ENCODE measurements at regions of chr11 and their contacts with region 1.

Region 1: GRCh38 chr11:8263769-8264410 is at the start of gene LMO1:
- DNase-seq: no peak
- H3K4me3 ChIP-seq: peak within 1 kb of the TSS; percentile 45
- CTCF ChIP-seq: peak; percentile 95

Region 2: DNA sequence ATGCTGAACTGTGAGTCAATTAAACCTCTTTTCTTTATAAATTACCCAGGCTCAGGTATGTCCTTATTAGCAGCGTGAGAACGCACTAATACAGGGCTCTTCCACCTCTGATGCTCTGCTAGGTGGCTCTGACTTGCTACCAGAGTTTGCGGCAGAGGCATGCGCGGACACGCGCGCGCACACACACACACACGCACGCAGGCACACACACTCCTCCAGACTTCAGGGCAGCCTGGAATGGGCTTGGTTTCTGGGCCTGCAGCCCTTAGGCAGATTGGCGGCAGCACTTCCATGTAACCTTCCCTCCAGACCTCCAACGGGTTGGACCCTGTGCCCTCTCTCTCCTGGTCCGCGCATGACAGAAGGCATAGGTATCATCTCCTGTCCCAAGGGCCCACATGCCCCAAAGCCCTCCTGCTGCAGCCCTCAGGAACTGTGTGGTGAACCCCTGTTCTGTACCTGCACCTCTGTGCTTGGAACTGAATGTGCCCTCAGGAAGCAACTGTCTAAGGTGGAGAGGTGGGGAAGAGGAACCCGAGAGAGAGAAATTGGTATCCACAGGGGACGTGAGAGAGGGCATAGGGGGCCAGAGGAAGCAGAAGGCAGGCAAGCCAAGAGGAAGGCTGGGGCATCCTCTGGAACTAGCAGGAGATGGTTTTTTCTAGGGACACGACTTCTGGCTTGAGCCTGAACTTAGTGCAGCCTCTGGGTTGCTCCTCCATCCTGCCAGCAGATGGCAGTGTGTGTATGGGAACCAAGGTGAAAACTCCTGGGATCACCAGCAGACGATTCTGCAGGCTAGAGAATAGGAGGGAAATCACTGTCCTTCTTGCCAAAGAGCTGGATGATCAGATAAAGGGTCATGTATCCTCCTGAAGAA is 71.6 kb before region 1 on chr11:
- CTCF ChIA-PET with region 1: interaction called, 19 read pairs
- POLR2A ChIA-PET with region 1: no interaction called
- DNase-seq: peak; percentile 12
- H3K4me3 ChIP-seq: no peak overlapping the region
- CTCF ChIP-seq: peak; percentile 84

Region 3: DNA sequence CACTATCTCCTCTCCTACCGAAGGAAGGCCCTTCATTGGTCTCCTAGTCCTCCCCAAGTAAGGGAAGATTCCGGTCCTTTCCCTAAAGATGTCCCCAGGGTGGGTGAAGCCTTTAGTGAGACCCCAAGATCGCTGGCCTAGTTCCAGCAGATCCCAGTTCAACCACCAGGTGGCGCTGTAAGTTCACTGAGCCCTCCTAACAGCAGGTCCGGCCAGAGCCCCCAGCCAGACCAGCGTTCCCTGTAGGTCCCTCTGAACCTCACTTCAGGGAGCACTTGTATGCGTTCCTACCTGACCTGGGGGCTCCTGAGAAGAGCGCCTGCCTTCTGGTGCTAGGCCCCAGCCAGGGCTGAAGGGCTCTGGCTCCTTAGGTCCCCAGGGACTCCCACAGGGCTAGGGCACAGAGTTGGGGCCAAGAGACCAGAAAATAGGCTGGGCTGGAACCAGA is 38.3 kb before region 1 on chr11:
- CTCF ChIA-PET with region 1: interaction called, 46 read pairs
- POLR2A ChIA-PET with region 1: no interaction called
- DNase-seq: no peak
- H3K4me3 ChIP-seq: no peak overlapping the region
- CTCF ChIP-seq: peak; percentile 83

Region 4: GRCh38 chr11:8252388-8252787 is 11.5 kb before region 1 on chr11:
- CTCF ChIA-PET with region 1: interaction called, 38 read pairs
- POLR2A ChIA-PET with region 1: no interaction called
- DNase-seq: no peak
- H3K4me3 ChIP-seq: no peak overlapping the region
- CTCF ChIP-seq: no peak

Region 5: GRCh38 chr11:8298801-8299786 is 35.2 kb after region 1 on chr11:
- CTCF ChIA-PET with region 1: interaction called, 12 read pairs
- POLR2A ChIA-PET with region 1: no interaction called
- DNase-seq: no peak
- H3K4me3 ChIP-seq: no peak overlapping the region
- CTCF ChIP-seq: no peak

Region 6: DNA sequence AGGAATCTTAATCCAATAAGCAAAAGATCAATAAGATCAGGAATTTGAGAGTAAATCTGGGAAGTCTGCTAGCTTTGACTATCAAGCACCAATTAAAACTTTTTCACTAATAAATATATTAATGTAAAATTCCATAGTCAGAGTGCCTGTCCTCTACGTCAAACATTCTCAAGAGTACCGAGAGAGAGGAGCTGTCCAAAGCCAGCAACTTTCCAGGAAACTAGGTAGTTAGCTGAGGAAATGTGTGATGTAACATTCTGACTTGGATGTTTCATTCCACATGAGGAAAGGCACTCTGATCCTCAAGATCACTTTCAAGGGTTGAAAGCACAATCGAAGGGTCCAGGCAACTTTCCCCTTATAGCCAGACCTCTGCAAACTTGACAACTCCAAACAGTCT is 217.0 kb after region 1 on chr11:
- CTCF ChIA-PET with region 1: no interaction called
- POLR2A ChIA-PET with region 1: no interaction called
- DNase-seq: no peak
- H3K4me3 ChIP-seq: no peak overlapping the region
- CTCF ChIP-seq: no peak

Measured in AG04449 (cell line).